Caco-2 (cell line): ENCODE measurements at regions of chr12 and their contacts with region 1.

Region 1: GRCh38 chr12:102896067-102896466 is 21.0 kb downstream of the PAH start:
- DNase-seq: no peak
- H3K4me3 ChIP-seq: no peak overlapping the region
- H3K4me3 Mint-ChIP-seq: no peak overlapping the region
- H3K27ac Mint-ChIP-seq: no peak overlapping the region
- H3K4me1 ChIP-seq: peaks cover 4% of the 10 kb centered on the region; the same call in 1 of the 2 replicates
- H3K4me1 Mint-ChIP-seq: no peaks in the 10 kb centered on the region
- H3K27me3 ChIP-seq: no peaks in the 10 kb centered on the region; the same call in 1 of the 2 replicates
- H3K27me3 Mint-ChIP-seq: no peaks in the 10 kb centered on the region
- CTCF ChIP-seq: no peak

Region 2: DNA sequence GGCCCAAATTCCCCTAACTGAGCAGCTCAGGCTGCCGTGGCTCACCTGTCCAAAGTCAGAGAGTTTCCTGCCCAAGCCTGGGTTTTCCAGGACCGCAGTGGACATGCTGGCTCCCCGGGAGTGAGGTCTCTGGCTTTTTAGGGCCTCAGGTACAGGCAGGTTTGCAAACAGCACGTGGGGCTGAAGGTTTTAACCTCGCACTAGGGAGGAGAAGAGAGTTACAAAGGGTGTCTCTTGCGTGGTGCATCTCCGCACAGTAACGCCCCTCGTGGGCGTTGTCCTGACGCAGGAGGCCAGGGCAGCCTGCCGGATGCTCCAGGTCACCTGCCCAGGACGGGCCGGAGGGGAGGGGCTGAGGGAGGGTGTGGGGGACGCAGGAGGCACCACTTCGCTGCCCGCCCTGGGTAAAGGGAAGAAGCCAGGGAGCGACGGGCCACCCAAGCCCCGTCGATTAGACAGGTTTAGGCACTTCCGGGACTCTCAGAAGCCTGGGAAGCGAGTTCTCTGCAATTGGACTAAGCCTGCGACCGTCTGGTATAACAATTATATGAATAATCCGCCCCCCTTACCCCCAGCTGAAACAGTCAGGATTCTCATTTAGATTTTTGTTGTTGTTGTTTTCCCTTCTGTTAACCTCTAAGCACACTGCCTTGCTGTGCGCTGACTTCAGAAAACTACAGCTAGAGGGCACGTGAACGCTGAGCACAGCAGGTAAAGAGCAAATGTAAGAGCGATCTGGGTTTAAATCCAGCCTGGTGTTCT is 21.1 kb after region 1 on chr12 and contains the start of gene PAH:
- CTCF ChIA-PET with region 1: no interaction called
- POLR2A ChIA-PET with region 1: no interaction called
- intact Hi-C with region 1: loop called (anchors 2 kb)
- DNase-seq: peak; percentile 63 to 74
- H3K4me3 ChIP-seq: peak within 1 kb of the TSS; percentile 44
- H3K4me3 Mint-ChIP-seq: peak within 1 kb of the TSS; percentile 71
- H3K27ac Mint-ChIP-seq: peak within 1 kb of the TSS; percentile 53
- H3K4me1 ChIP-seq: peaks cover 18% of the 10 kb centered on the region
- H3K4me1 Mint-ChIP-seq: peaks cover 17% of the 10 kb centered on the region
- H3K27me3 ChIP-seq: no peaks in the 10 kb centered on the region
- H3K27me3 Mint-ChIP-seq: no peaks in the 10 kb centered on the region
- CTCF ChIP-seq: peak in 1 of 2 experiments; percentile 25
- total RNA-seq, gene PAH: 5.1 and 5.8 TPM in 2 replicates